ENCODE measurements at regions of chr2 and their contacts with region 1.

Region 1: GRCh38 chr2:20642055-20642971 is 8.6 kb downstream of the HS1BP3 start:
- DNase-seq: peak; percentile 52 to 83 (median 71)
- ATAC-seq: peak; percentile 100
- H3K4me3 ChIP-seq: no peak overlapping the region
- H3K4me3 Mint-ChIP-seq: no peak overlapping the region
- H3K27ac ChIP-seq: no peak overlapping the region
- H3K27ac Mint-ChIP-seq: no peak overlapping the region
- H3K4me1 ChIP-seq: peaks cover 4% of the 10 kb centered on the region
- H3K4me1 Mint-ChIP-seq: peaks cover 4% of the 10 kb centered on the region
- H3K27me3 ChIP-seq: no peaks in the 10 kb centered on the region
- H3K27me3 Mint-ChIP-seq: no peaks in the 10 kb centered on the region
- CTCF ChIP-seq: peak; percentile 69

Region 2: GRCh38 chr2:19963386-19963785 is 678.9 kb before region 1 on chr2:
- CTCF ChIA-PET with region 1: no interaction called
- POLR2A ChIA-PET with region 1: no interaction called
- intact Hi-C with region 1: loop called in 1 of 2 experiments (anchors 5 kb)
- DNase-seq: no peak
- ATAC-seq: no peak
- H3K4me3 ChIP-seq: no peak overlapping the region
- H3K4me3 Mint-ChIP-seq: no peak overlapping the region
- H3K27ac ChIP-seq: no peak overlapping the region
- H3K27ac Mint-ChIP-seq: no peak overlapping the region
- H3K4me1 ChIP-seq: no peaks in the 10 kb centered on the region
- H3K4me1 Mint-ChIP-seq: no peaks in the 10 kb centered on the region
- H3K27me3 ChIP-seq: no peaks in the 10 kb centered on the region
- H3K27me3 Mint-ChIP-seq: no peaks in the 10 kb centered on the region
- CTCF ChIP-seq: no peak

Region 3: DNA sequence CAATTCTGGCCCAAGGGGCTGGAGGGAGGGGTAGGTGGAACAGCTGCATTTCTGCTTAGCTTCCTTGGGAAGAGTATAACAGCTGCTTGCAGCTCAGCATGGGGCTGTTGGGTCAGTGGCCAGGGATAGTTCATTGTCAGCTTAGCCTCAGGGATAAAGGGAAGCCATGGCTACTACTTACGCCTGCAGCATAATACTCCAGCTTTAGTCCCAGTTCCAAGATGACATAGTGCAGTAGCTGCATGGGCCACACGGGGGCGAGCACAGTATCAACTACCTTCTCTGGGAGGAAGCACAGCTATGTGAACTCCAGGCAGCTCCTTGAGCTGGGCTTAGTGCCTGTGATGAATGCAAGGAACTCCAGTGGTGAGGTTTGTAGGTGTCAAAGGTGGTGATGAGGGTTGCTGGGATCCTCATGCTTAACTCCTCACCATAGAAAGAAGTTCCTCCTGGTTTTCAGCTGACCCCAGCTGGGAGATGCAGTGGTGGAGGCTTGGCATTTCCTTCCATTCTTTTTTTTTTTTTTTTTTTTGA is 230.9 kb before region 1 on chr2:
- CTCF ChIA-PET with region 1: interaction called, 24 read pairs
- POLR2A ChIA-PET with region 1: no interaction called
- intact Hi-C with region 1: loop called (anchors 1 kb)
- DNase-seq: peak; percentile 37 to 73 (median 64)
- ATAC-seq: peak; percentile 99
- H3K4me3 ChIP-seq: no peak overlapping the region
- H3K4me3 Mint-ChIP-seq: no peak overlapping the region
- H3K27ac ChIP-seq: no peak overlapping the region
- H3K27ac Mint-ChIP-seq: no peak overlapping the region
- H3K4me1 ChIP-seq: no peaks in the 10 kb centered on the region
- H3K4me1 Mint-ChIP-seq: no peaks in the 10 kb centered on the region
- H3K27me3 ChIP-seq: no peaks in the 10 kb centered on the region
- H3K27me3 Mint-ChIP-seq: peaks cover 11% of the 10 kb centered on the region
- CTCF ChIP-seq: peak; percentile 60

Region 4: DNA sequence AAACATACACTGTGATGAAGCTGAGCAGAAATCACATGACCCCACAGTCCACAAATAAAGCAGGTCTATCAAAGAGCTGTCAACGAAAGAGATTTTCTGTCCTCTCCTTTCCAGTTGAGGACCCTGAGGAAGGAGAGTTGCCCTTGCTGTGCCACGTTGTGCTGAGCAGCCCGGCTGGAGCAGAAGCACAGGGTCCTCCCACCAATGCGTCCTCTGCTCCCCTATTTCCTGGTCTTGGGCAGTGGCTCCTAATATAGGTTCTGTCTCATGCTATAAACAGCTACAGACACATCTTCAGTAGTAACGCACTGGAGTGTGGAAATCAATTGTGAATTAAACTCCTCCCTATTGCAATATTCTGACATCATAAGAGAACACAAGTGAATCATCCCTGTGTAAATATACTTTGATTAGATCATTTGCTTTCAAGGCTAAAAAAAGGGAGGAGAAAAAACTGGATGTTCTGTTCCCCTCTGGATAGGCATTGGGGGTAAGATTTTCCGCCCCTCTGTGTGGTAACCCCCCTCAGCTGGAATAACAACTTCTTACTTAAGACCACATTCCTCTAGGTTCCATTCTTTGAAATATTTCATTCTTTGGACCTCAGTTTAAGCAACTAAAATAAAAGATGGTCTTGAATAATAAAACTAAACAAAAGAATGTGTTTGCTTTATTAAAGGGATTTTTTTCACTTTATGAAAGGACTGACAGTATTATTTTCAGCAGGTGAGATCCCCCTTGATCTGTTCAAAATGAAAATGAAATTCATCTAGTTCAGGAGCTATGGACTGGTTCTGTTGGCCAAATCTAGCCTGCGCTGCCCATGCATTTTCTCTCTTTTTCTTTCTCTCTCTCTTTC is 203.8 kb before region 1 on chr2:
- CTCF ChIA-PET with region 1: interaction called, 97 read pairs
- POLR2A ChIA-PET with region 1: no interaction called
- intact Hi-C with region 1: loop called in 1 of 2 experiments (anchors 1 kb)
- DNase-seq: peak in 1 of 9 experiments; percentile 18
- ATAC-seq: no peak
- H3K4me3 ChIP-seq: no peak overlapping the region
- H3K4me3 Mint-ChIP-seq: no peak overlapping the region
- H3K27ac ChIP-seq: no peak overlapping the region
- H3K27ac Mint-ChIP-seq: no peak overlapping the region
- H3K4me1 ChIP-seq: no peaks in the 10 kb centered on the region
- H3K4me1 Mint-ChIP-seq: no peaks in the 10 kb centered on the region
- H3K27me3 ChIP-seq: no peaks in the 10 kb centered on the region
- H3K27me3 Mint-ChIP-seq: peaks cover 20% of the 10 kb centered on the region
- CTCF ChIP-seq: no peak

Region 5: DNA sequence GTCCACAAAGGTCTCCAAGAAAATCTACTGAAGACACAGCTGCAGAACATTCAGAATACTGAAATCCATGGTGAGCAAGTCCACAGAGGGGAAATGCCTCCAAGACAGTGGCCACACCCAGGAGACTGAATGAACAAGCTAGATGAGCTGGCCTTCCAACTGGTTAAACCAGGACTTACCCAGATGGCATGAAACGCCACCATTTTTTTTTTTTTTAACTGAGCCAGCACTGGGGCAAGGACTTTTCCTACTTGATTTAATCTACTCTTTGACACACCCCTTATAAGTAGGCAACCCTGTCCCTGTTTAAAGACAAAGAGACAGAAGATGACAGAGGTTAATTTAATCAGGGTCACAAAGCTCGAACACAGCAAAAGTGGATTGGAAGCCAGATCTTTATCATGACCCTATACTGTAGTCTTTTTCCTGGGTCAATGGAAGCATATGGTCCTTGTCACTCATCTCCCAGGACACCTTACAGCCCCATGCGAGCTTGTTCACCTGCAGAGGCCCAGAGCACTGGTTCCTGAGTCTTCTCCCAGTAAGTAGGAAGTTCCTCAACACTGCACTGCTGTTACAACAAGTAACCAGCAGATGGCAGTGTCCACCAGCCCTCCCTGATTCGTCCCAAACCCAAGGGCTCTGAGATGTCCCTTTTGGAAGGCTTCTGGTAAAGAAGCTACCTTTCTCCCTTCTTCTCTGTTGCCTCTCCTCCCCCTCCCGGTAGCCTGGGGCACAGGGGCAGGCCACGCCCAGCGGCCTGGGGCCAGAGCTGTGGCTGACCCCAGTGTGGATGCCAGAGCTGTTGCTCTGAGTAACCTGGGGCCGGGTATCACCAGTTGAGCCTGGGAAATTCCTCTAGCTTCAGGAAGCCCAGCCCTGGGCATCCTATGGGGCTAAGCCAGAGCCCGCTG is 19.0 kb after region 1 on chr2:
- CTCF ChIA-PET with region 1: interaction called, 22 read pairs
- POLR2A ChIA-PET with region 1: no interaction called
- intact Hi-C with region 1: no loop called
- DNase-seq: peak; percentile 35 to 82 (median 63)
- ATAC-seq: peak; percentile 90
- H3K4me3 ChIP-seq: no peak overlapping the region
- H3K4me3 Mint-ChIP-seq: no peak overlapping the region
- H3K27ac ChIP-seq: no peak overlapping the region
- H3K27ac Mint-ChIP-seq: no peak overlapping the region
- H3K4me1 ChIP-seq: peaks cover 10% of the 10 kb centered on the region
- H3K4me1 Mint-ChIP-seq: peaks cover 9% of the 10 kb centered on the region
- H3K27me3 ChIP-seq: peaks cover 14 to 31% of the 10 kb centered on the region in 2 experiments
- H3K27me3 Mint-ChIP-seq: peaks cover 52% of the 10 kb centered on the region
- CTCF ChIP-seq: peak; percentile 97

Region 6: DNA sequence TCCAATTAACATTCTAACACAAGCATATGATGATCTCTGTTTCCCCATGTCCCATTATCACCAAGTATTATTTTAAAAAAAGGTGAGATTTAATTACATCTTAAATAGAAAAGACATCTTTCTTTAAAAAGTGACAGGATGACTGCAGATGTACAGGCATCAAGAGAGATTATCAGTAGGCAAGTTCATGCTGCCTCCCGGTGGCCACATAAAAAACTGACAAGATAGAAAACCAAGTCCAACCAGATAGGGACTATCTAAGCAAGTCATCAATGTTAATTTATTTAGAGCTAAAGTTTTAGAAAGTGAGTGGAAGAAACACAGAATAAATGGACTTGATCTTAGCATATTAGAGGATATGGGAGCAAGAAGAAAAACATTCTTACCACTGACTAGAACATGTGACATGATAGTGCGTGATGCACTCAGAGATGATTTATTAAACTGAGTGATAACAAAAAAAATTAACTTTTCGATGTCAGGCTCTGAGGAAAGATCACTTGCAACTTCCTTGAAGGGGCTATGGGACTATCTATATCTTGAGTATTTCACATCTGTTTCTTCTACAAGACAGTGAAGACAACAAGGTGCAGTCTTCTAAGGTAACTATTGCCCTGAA is 476.1 kb after region 1 on chr2:
- CTCF ChIA-PET with region 1: no interaction called
- POLR2A ChIA-PET with region 1: no interaction called
- intact Hi-C with region 1: no loop called
- DNase-seq: peak in 2 of 9 experiments; percentile 7 to 10
- ATAC-seq: no peak
- H3K4me3 ChIP-seq: no peak overlapping the region
- H3K4me3 Mint-ChIP-seq: no peak overlapping the region
- H3K27ac ChIP-seq: no peak overlapping the region
- H3K27ac Mint-ChIP-seq: no peak overlapping the region
- H3K4me1 ChIP-seq: no peaks in the 10 kb centered on the region
- H3K4me1 Mint-ChIP-seq: no peaks in the 10 kb centered on the region
- H3K27me3 ChIP-seq: no peaks in the 10 kb centered on the region
- H3K27me3 Mint-ChIP-seq: peaks cover 12% of the 10 kb centered on the region
- CTCF ChIP-seq: no peak

Measured in CD8-positive, alpha-beta T cell (primary cell).